Naive thymus-derived CD4-positive, alpha-beta T cell (primary cell): ENCODE measurements at regions of chr16 and their contacts with region 1.

Region 1: GRCh38 chr16:67993189-67994039 is 5.9 kb downstream of the DPEP2 start:
- DNase-seq: peak; percentile 74 to 90 (median 83)
- ATAC-seq: peak; percentile 93
- H3K4me3 ChIP-seq: peak overlapping the region; percentile 65
- H3K4me3 Mint-ChIP-seq: peak overlapping the region; percentile 83 to 94 (median 92)
- H3K27ac ChIP-seq: peak overlapping the region; percentile 87
- H3K27ac Mint-ChIP-seq: peak overlapping the region; percentile 93 to 99 (median 97)
- H3K4me1 ChIP-seq: peaks cover 8 to 25% of the 10 kb centered on the region in 2 donors
- H3K4me1 Mint-ChIP-seq: peaks cover 10 to 48% (median 35%) of the 10 kb centered on the region in 7 donors
- H3K27me3 ChIP-seq: no peaks in the 10 kb centered on the region
- H3K27me3 Mint-ChIP-seq: no peaks in the 10 kb centered on the region

Region 2: GRCh38 chr16:67883872-67884261 is 109.5 kb before region 1 on chr16:
- CTCF ChIA-PET with region 1: interaction called, 3 read pairs
- POLR2A ChIA-PET with region 1: no interaction called
- intact Hi-C with region 1: loop called in 1 of 2 experiments (anchors 1 kb)
- DNase-seq: peak; percentile 62 to 83 (median 74)
- ATAC-seq: peak; percentile 84
- H3K4me3 ChIP-seq: no peak overlapping the region
- H3K4me3 Mint-ChIP-seq: no peak overlapping the region
- H3K27ac ChIP-seq: no peak overlapping the region
- H3K27ac Mint-ChIP-seq: peak overlapping the region in 4 of 9 donors; percentile 19 to 42 (median 36)
- H3K4me1 ChIP-seq: no peaks in the 10 kb centered on the region
- H3K4me1 Mint-ChIP-seq: peaks cover 0 to 6% (median 0%) of the 10 kb centered on the region in 7 donors
- H3K27me3 ChIP-seq: no peaks in the 10 kb centered on the region
- H3K27me3 Mint-ChIP-seq: no peaks in the 10 kb centered on the region

Region 3: DNA sequence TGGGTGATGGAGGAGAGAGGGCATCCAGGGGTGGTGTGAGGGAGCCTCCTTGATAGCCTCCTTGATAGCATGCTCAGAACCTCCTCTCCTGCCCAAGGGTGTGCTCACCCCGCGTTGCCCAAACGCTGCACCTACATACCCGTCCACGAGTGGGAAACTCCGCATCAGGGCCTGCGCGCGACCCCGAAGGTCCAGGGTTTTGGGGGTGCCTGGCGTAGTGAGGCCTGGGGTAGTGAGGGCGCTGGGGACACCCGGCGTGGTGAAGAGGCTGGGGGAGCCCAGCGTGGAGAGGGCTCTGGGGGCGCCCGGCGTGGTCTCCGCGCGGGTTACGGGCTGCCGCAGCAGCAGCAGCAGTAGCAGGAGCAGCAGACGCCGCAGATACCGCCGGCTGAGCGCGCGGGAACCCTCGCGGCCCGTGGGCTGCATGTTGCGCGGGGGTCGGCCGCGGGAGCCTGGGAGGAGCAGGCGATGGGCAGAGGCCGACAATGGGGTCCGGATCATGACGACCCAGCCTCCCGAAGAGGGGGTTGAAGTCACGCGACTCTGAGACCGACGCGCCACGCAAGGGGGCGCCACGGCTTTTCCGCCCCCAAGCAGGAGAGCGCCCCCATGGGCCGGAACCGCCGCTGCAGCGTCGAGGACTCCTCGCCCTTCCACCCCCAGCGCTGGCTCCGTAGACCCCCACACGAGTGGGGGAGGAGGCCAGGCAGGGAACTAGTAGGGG is 13.3 kb before region 1 on chr16 and contains the start of gene DPEP3:
- CTCF ChIA-PET with region 1: interaction called, 6 read pairs
- POLR2A ChIA-PET with region 1: interaction called, 32 read pairs
- intact Hi-C with region 1: loop called in 1 of 2 experiments (anchors 1 kb)
- DNase-seq: peak in 1 of 9 donors; percentile 15
- ATAC-seq: peak; percentile 35
- H3K4me3 ChIP-seq: no peak within 1 kb of the TSS
- H3K4me3 Mint-ChIP-seq: no peak within 1 kb of the TSS
- H3K27ac ChIP-seq: no peak within 1 kb of the TSS
- H3K27ac Mint-ChIP-seq: no peak within 1 kb of the TSS
- H3K4me1 ChIP-seq: peaks cover 9 to 23% of the 10 kb centered on the region in 2 donors
- H3K4me1 Mint-ChIP-seq: peaks cover 18 to 31% (median 26%) of the 10 kb centered on the region in 7 donors
- H3K27me3 ChIP-seq: no peaks in the 10 kb centered on the region
- H3K27me3 Mint-ChIP-seq: peaks cover 0 to 6% (median 0%) of the 10 kb centered on the region in 5 donors
- total RNA-seq, gene DPEP3: 0.10 to 2.3 (median 1.6) TPM

Region 4: DNA sequence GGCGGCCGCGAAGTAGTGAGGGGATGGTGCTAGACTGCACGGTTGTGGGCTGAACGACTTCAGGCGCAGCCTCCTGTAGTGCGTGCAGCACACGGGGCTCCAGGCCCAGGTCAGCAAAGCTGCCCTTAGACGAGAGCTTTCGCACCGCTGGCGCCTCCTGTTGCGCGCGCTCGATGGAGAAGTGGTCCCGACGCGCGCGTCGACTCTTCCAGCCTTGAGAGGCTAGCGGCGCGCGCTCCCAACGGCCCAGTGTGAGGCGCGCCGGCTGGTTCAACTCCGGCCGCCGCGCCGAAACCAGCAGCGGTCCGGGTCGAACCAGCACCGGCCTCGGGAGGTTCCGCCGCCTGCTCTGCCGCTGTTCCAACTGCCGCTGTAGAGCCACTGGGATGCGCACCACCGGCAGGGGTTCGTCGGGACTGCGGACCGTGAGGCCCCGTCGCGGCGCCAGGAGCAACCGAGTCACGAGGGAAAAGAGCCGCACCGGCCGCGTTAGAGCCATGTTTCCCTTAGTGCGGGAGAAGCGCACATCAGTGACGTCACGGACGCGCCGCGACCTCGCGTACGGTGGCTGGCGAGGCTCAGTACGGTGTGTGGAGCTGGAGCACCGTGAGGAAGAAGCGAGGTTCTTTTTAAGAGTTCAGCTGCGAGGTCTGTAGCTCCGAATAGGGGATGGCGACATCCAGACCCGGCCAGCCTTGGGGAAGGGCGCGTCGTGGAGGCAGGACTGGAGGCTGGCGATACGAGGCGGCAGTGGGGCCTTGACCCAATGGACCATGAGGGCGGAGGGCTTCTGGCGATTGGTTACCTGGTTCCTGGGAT is 29.5 kb after region 1 on chr16 and contains the starts of genes DDX28 and DUS2:
- CTCF ChIA-PET with region 1: interaction called, 10 read pairs
- POLR2A ChIA-PET with region 1: interaction called, 422 read pairs
- intact Hi-C with region 1: loop called (anchors 1 kb)
- DNase-seq: peak; percentile 89 to 98 (median 94)
- ATAC-seq: peak; percentile 98
- H3K4me3 ChIP-seq: peak within 1 kb of the TSS; percentile 67
- H3K4me3 Mint-ChIP-seq: peak within 1 kb of the TSS; percentile 88 to 100 (median 98)
- H3K27ac ChIP-seq: peak within 1 kb of the TSS; percentile 92
- H3K27ac Mint-ChIP-seq: peak within 1 kb of the TSS; percentile 94 to 100 (median 96)
- H3K4me1 ChIP-seq: peaks cover 16 to 22% of the 10 kb centered on the region in 2 donors
- H3K4me1 Mint-ChIP-seq: peaks cover 13 to 42% (median 30%) of the 10 kb centered on the region in 7 donors
- H3K27me3 ChIP-seq: no peaks in the 10 kb centered on the region
- H3K27me3 Mint-ChIP-seq: peaks cover 0 to 2% (median 0%) of the 10 kb centered on the region in 5 donors
- total RNA-seq, gene DDX28: 15.5 to 19.9 (median 19.1) TPM
- total RNA-seq, gene DUS2: 13.6 to 25.9 (median 18.3) TPM

Region 5: GRCh38 chr16:68064791-68065365 is 71.5 kb after region 1 on chr16:
- CTCF ChIA-PET with region 1: interaction called, 3 read pairs
- POLR2A ChIA-PET with region 1: interaction called, 3 read pairs
- intact Hi-C with region 1: loop called (anchors 1 kb)
- DNase-seq: peak; percentile 45 to 72 (median 65)
- ATAC-seq: peak; percentile 84
- H3K4me3 ChIP-seq: no peak overlapping the region
- H3K4me3 Mint-ChIP-seq: peak overlapping the region; percentile 3 to 69 (median 34)
- H3K27ac ChIP-seq: peak overlapping the region; percentile 52
- H3K27ac Mint-ChIP-seq: peak overlapping the region; percentile 65 to 90 (median 83)
- H3K4me1 ChIP-seq: peaks cover 56 to 67% of the 10 kb centered on the region in 2 donors
- H3K4me1 Mint-ChIP-seq: peaks cover 60 to 86% (median 76%) of the 10 kb centered on the region in 7 donors
- H3K27me3 ChIP-seq: no peaks in the 10 kb centered on the region
- H3K27me3 Mint-ChIP-seq: no peaks in the 10 kb centered on the region

Region 6: GRCh38 chr16:68206245-68206644 is 212.8 kb after region 1 on chr16:
- CTCF ChIA-PET with region 1: no interaction called
- POLR2A ChIA-PET with region 1: no interaction called
- intact Hi-C with region 1: no loop called
- DNase-seq: no peak
- ATAC-seq: no peak
- H3K4me3 ChIP-seq: no peak overlapping the region
- H3K4me3 Mint-ChIP-seq: no peak overlapping the region
- H3K27ac ChIP-seq: no peak overlapping the region
- H3K27ac Mint-ChIP-seq: peak overlapping the region in 5 of 9 donors; percentile 7 to 84 (median 48)
- H3K4me1 ChIP-seq: peaks cover 0 to 20% of the 10 kb centered on the region in 2 donors
- H3K4me1 Mint-ChIP-seq: peaks cover 23 to 64% (median 46%) of the 10 kb centered on the region in 7 donors
- H3K27me3 ChIP-seq: no peaks in the 10 kb centered on the region
- H3K27me3 Mint-ChIP-seq: no peaks in the 10 kb centered on the region